B cell (primary cell): ENCODE measurements at regions of chr6 and their contacts with region 1.

Region 1: GRCh38 chr6:108598305-108598863 is 37.7 kb downstream of the FOXO3 start:
- DNase-seq: no peak
- ATAC-seq: no peak
- H3K4me3 ChIP-seq: no peak overlapping the region
- H3K4me3 Mint-ChIP-seq: no peak overlapping the region
- H3K27ac ChIP-seq: no peak overlapping the region
- H3K27ac Mint-ChIP-seq: no peak overlapping the region
- H3K4me1 ChIP-seq: peaks cover 25 to 32% of the 10 kb centered on the region in 2 donors
- H3K4me1 Mint-ChIP-seq: peaks cover 41% of the 10 kb centered on the region
- H3K27me3 ChIP-seq: no peaks in the 10 kb centered on the region
- H3K27me3 Mint-ChIP-seq: no peaks in the 10 kb centered on the region
- CTCF ChIP-seq: no peak

Region 2: DNA sequence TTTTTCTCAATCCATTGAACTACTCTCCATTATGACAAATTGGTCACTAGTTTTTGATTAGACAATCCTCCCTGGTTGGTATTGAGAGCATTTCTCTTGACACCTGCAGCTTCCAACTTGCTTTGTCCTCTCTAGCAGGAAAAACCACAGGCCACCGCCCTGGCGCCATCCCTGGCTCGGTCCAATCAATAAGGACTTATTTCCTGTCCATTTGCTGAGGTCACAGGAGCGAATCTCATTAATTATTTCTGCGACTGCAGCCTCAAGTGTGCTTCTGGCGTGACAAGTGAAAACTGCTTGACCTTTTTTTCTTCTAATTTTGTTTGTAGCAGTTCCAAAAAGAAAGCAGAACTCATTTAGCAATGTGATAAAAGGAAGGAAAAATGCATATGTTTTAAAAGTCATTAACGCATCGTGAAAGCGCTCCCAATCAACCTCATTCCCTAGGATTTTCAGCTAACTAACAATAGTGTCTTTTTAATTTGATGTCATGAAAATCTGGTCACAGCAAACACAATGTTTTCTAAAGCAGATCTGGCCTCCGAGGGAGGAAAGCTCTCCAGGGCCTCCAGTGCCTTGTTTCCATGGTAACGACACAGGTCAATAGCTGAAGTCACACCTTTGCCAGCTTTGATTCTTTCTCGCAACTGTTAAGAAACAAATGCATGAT is 1444.1 kb before region 1 on chr6:
- CTCF ChIA-PET with region 1: no interaction called
- POLR2A ChIA-PET with region 1: no interaction called
- intact Hi-C with region 1: no loop called
- DNase-seq: no peak
- ATAC-seq: no peak
- H3K4me3 ChIP-seq: no peak overlapping the region
- H3K4me3 Mint-ChIP-seq: no peak overlapping the region
- H3K27ac ChIP-seq: no peak overlapping the region
- H3K27ac Mint-ChIP-seq: no peak overlapping the region
- H3K4me1 ChIP-seq: no peaks in the 10 kb centered on the region
- H3K4me1 Mint-ChIP-seq: peaks cover 2% of the 10 kb centered on the region
- H3K27me3 ChIP-seq: no peaks in the 10 kb centered on the region
- H3K27me3 Mint-ChIP-seq: no peaks in the 10 kb centered on the region
- CTCF ChIP-seq: no peak

Region 3: GRCh38 chr6:108640104-108640503 is 41.7 kb after region 1 on chr6:
- CTCF ChIA-PET with region 1: no interaction called
- POLR2A ChIA-PET with region 1: no interaction called
- intact Hi-C with region 1: loop called (anchors 5 kb)
- DNase-seq: peak; percentile 53
- ATAC-seq: no peak
- H3K4me3 ChIP-seq: no peak overlapping the region
- H3K4me3 Mint-ChIP-seq: no peak overlapping the region
- H3K27ac ChIP-seq: no peak overlapping the region
- H3K27ac Mint-ChIP-seq: no peak overlapping the region
- H3K4me1 ChIP-seq: peaks cover 0 to 3% of the 10 kb centered on the region in 2 donors
- H3K4me1 Mint-ChIP-seq: peaks cover 21% of the 10 kb centered on the region
- H3K27me3 ChIP-seq: no peaks in the 10 kb centered on the region
- H3K27me3 Mint-ChIP-seq: no peaks in the 10 kb centered on the region
- CTCF ChIP-seq: no peak

Region 4: DNA sequence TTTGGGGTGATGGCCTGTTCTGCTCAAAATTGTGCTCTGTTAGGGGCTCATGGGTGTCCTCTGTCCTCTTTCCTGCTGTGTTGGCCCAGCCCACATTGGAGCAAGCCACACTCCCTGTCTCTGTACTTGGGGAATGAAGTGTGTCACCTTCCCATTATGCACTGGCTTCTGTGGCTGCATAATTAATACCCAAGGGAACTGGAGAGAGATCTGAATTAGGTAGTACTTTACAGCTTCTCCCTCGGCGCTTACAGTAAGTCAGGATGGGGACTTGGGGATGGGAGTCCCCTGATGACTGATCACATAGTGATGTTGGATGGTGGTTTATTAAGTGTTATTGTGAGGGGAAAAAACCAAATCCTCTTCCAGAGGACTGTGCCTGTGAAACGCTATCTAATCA is 79.0 kb after region 1 on chr6:
- CTCF ChIA-PET with region 1: no interaction called
- POLR2A ChIA-PET with region 1: no interaction called
- intact Hi-C with region 1: no loop called
- DNase-seq: no peak
- ATAC-seq: no peak
- H3K4me3 ChIP-seq: no peak overlapping the region
- H3K4me3 Mint-ChIP-seq: no peak overlapping the region
- H3K27ac ChIP-seq: no peak overlapping the region
- H3K27ac Mint-ChIP-seq: no peak overlapping the region
- H3K4me1 ChIP-seq: peaks cover 0 to 3% of the 10 kb centered on the region in 2 donors
- H3K4me1 Mint-ChIP-seq: peaks cover 9% of the 10 kb centered on the region
- H3K27me3 ChIP-seq: no peaks in the 10 kb centered on the region
- H3K27me3 Mint-ChIP-seq: no peaks in the 10 kb centered on the region
- CTCF ChIP-seq: no peak